ENCODE measurements at regions of chr19 and their contacts with region 1.

Region 1: GRCh38 chr19:33778089-33778791 is 18.4 kb upstream of the KCTD15 start:
- DNase-seq: peak; percentile 85 to 96
- ATAC-seq: peak; percentile 61 to 85
- H3K4me3 ChIP-seq: peak overlapping the region; percentile 42
- H3K27ac ChIP-seq: peak overlapping the region in 1 of 2 experiments; percentile 42; a peak in 2 of 6 replicates
- H3K4me1 ChIP-seq: peaks cover 27% of the 10 kb centered on the region
- CTCF ChIP-seq: peak; percentile 100
- EP300 ChIP-seq: no peak
- POLR2A ChIP-seq: no peak
- RAD21 ChIP-seq: peak; percentile 100

Region 2: GRCh38 chr19:33430674-33431277 is 347.5 kb before region 1 on chr19:
- CTCF ChIA-PET with region 1: interaction called, 572 read pairs
- POLR2A ChIA-PET with region 1: no interaction called
- DNase-seq: peak; percentile 80 to 93
- ATAC-seq: peak; percentile 90 to 98
- H3K4me3 ChIP-seq: no peak overlapping the region
- H3K27ac ChIP-seq: no peak overlapping the region
- H3K4me1 ChIP-seq: no peaks in the 10 kb centered on the region
- CTCF ChIP-seq: peak; percentile 98
- EP300 ChIP-seq: no peak
- POLR2A ChIP-seq: no peak
- RAD21 ChIP-seq: peak; percentile 90 to 95

Region 3: GRCh38 chr19:33660410-33661124 is 117.7 kb before region 1 on chr19:
- CTCF ChIA-PET with region 1: no interaction called
- POLR2A ChIA-PET with region 1: no interaction called
- DNase-seq: peak in 1 of 2 experiments; percentile 26
- ATAC-seq: peak; percentile 37 to 62; a peak in 3 of 6 replicates
- H3K4me3 ChIP-seq: peak overlapping the region; percentile 17; the same call in 1 of the 3 replicates
- H3K27ac ChIP-seq: no peak overlapping the region
- H3K4me1 ChIP-seq: no peaks in the 10 kb centered on the region
- CTCF ChIP-seq: no peak
- EP300 ChIP-seq: no peak
- POLR2A ChIP-seq: no peak
- RAD21 ChIP-seq: no peak

Region 4: GRCh38 chr19:33795370-33796163 is 17.3 kb after region 1 on chr19:
- CTCF ChIA-PET with region 1: interaction called, 313 read pairs
- POLR2A ChIA-PET with region 1: interaction called, 13 read pairs
- DNase-seq: peak; percentile 94 to 96
- ATAC-seq: peak; percentile 70 to 80
- H3K4me3 ChIP-seq: peak overlapping the region; percentile 88
- H3K27ac ChIP-seq: peak overlapping the region; percentile 96 to 97
- H3K4me1 ChIP-seq: peaks cover 28% of the 10 kb centered on the region
- CTCF ChIP-seq: peak; percentile 100
- EP300 ChIP-seq: peak; percentile 34 to 73; a peak in 1 of 5 replicates
- POLR2A ChIP-seq: peak; percentile 85
- RAD21 ChIP-seq: peak; percentile 42 to 87; a peak in 4 of 5 replicates

Region 5: GRCh38 chr19:33905937-33906576 is 127.8 kb after region 1 on chr19:
- CTCF ChIA-PET with region 1: interaction called, 14 read pairs
- POLR2A ChIA-PET with region 1: no interaction called
- DNase-seq: peak; percentile 22 to 52
- ATAC-seq: peak; percentile 50 to 76
- H3K4me3 ChIP-seq: peak overlapping the region; percentile 53
- H3K27ac ChIP-seq: peak overlapping the region; percentile 51 to 82
- H3K4me1 ChIP-seq: 0 out of 3 replicates have a peak, but pooled peaks cover 9% of the 10 kb centered on the region
- CTCF ChIP-seq: no peak
- EP300 ChIP-seq: no peak
- POLR2A ChIP-seq: no peak
- RAD21 ChIP-seq: no peak

Region 6: DNA sequence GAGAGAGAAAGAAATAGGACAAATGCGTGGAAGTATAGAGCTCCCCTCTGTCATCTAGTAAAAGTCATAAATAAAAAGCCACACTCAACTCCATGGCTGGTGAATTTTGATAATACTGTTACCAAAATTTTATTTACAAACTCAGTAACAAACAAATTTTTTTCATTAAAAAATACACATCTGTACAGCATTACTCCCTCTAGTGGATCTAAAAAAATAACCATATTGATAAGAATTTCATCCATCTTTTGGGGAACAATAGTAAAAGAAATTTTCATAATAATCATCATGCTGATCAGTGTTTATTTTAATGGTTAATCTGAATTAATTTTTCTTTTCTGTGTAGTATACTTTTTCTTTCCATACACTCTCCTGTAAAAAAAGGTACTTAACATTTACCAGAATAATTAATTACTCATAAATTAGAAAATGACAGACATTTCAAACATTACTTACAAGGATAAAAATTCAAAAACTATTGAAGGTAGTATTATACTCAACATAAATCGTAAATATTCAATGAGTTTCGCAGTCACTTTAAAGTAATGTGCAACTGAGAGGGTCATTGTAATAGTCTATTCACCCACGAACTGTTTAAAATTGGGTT is 220.6 kb after region 1 on chr19:
- CTCF ChIA-PET with region 1: interaction called, 88 read pairs
- POLR2A ChIA-PET with region 1: interaction called, 4 read pairs
- DNase-seq: peak; percentile 16 to 44
- ATAC-seq: peak in 1 of 2 experiments; percentile 38; a peak in 1 of 6 replicates
- H3K4me3 ChIP-seq: peak overlapping the region; percentile 3; the same call in 2 of the 3 replicates
- H3K27ac ChIP-seq: no peak overlapping the region
- H3K4me1 ChIP-seq: peaks cover 10% of the 10 kb centered on the region; the same call in 2 of the 3 replicates
- CTCF ChIP-seq: peak; percentile 82
- EP300 ChIP-seq: no peak
- POLR2A ChIP-seq: no peak
- RAD21 ChIP-seq: peak; percentile 58 to 73

Region 7: GRCh38 chr19:34104096-34104495 is 325.9 kb after region 1 on chr19:
- CTCF ChIA-PET with region 1: interaction called, 176 read pairs
- POLR2A ChIA-PET with region 1: no interaction called
- DNase-seq: no peak
- ATAC-seq: no peak
- H3K4me3 ChIP-seq: no peak overlapping the region
- H3K27ac ChIP-seq: no peak overlapping the region
- H3K4me1 ChIP-seq: no peaks in the 10 kb centered on the region
- CTCF ChIP-seq: no peak
- EP300 ChIP-seq: no peak
- POLR2A ChIP-seq: no peak
- RAD21 ChIP-seq: no peak

Region 8: GRCh38 chr19:34336781-34337271 is 558.6 kb after region 1 on chr19:
- CTCF ChIA-PET with region 1: interaction called, 14 read pairs
- POLR2A ChIA-PET with region 1: no interaction called
- DNase-seq: peak; percentile 46 to 51
- ATAC-seq: peak; percentile 45 to 67; a peak in 4 of 6 replicates
- H3K4me3 ChIP-seq: no peak overlapping the region
- H3K27ac ChIP-seq: no peak overlapping the region
- H3K4me1 ChIP-seq: peaks cover 5% of the 10 kb centered on the region; the same call in 2 of the 3 replicates
- CTCF ChIP-seq: peak; percentile 95
- EP300 ChIP-seq: no peak
- POLR2A ChIP-seq: no peak
- RAD21 ChIP-seq: peak; percentile 65 to 71

Region 9: GRCh38 chr19:35295792-35296462 is 1517.7 kb after region 1 on chr19:
- CTCF ChIA-PET with region 1: no interaction called
- POLR2A ChIA-PET with region 1: no interaction called
- DNase-seq: no peak
- ATAC-seq: peak; percentile 15 to 43; a peak in 3 of 6 replicates
- H3K4me3 ChIP-seq: no peak overlapping the region
- H3K27ac ChIP-seq: no peak overlapping the region
- H3K4me1 ChIP-seq: no peaks in the 10 kb centered on the region
- CTCF ChIP-seq: no peak
- EP300 ChIP-seq: no peak
- POLR2A ChIP-seq: no peak
- RAD21 ChIP-seq: no peak